ENCODE measurements at regions of chr22 and their contacts with region 1.

Region 1: GRCh38 chr22:17266251-17266971 is 47.2 kb upstream of the ADA2 start:
- DNase-seq: peak in 1 of 2 donors; percentile 64
- ATAC-seq: peak; percentile 18 to 53 (median 34)
- H3K4me3 ChIP-seq: no peak overlapping the region
- H3K27ac ChIP-seq: peak overlapping the region; percentile 97
- H3K4me1 ChIP-seq: peaks cover 26% of the 10 kb centered on the region
- H3K27me3 ChIP-seq: no peaks in the 10 kb centered on the region
- CTCF ChIP-seq: no peak

Region 2: DNA sequence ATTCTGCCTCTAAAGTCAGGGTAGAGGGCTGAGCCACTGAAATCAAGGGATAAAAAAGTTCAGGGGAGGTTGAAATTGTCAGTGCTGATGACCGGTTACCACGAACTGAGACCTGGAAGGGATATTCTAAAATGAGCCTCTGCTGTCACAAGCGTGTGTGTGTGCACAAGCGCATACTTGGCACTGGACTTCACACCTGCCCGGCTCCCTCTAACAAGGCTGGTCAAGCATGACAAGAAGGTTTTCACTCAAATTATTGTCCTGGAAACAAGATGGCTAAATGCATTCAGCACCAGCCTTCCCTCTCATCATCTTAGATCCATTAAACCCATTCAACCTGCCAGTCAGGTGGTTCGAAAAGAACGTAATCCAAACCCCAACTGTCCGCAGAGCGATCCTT is 48.1 kb after region 1 on chr22:
- intact Hi-C with region 1: loop called in 1 of 2 experiments (anchors 5 kb)
- DNase-seq: no peak
- ATAC-seq: peak; percentile 53 to 93 (median 87)
- H3K4me3 ChIP-seq: peak overlapping the region; percentile 1
- H3K27ac ChIP-seq: peak overlapping the region; percentile 63
- H3K4me1 ChIP-seq: peaks cover 10% of the 10 kb centered on the region
- H3K27me3 ChIP-seq: no peaks in the 10 kb centered on the region
- CTCF ChIP-seq: no peak

Region 3: DNA sequence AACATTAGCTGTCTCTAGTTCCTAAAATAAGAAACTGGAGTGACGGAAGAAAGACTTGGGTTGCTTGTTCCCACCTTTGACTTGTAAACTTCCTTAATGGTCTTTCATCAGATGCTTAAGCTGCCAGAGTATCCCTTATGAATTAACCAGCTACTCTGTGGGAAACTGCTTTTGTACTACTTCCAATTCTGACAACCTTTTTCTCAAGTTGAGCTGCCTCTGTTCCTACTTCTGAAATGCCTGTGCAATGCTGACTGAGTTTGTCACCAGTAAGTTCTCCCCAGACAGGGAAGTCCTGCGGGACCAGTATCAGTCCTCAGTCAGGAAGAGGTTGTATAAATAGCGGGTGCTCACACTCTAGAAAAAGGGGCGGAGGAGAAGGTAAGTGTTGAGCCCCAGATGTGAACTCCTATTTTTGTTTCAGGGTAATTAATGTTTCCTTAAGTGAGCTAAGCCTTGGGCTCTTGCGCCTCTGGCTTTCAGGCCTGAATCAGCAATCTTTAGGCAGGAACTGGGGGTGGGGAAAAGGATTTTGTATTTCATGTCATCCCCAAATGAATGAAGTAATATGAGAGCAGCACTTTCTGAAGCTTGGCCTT is 170.1 kb after region 1 on chr22:
- intact Hi-C with region 1: loop called in 1 of 2 experiments (anchors 10 kb)
- DNase-seq: no peak
- ATAC-seq: peak; percentile 53 to 80 (median 64)
- H3K4me3 ChIP-seq: peak overlapping the region; percentile 39
- H3K27ac ChIP-seq: peak overlapping the region; percentile 82
- H3K4me1 ChIP-seq: peaks cover 87% of the 10 kb centered on the region
- H3K27me3 ChIP-seq: no peaks in the 10 kb centered on the region
- CTCF ChIP-seq: no peak

Region 4: GRCh38 chr22:17492247-17492646 is 225.8 kb after region 1 on chr22:
- intact Hi-C with region 1: loop called in 1 of 2 experiments (anchors 10 kb)
- DNase-seq: no peak
- ATAC-seq: peak in 3 of 4 donors; percentile 36 to 77 (median 60)
- H3K4me3 ChIP-seq: no peak overlapping the region
- H3K27ac ChIP-seq: peak overlapping the region; percentile 46
- H3K4me1 ChIP-seq: peaks cover 25% of the 10 kb centered on the region
- H3K27me3 ChIP-seq: no peaks in the 10 kb centered on the region
- CTCF ChIP-seq: no peak

Measured in psoas muscle (tissue), 8 donors.